IMR-90 (cell line): ENCODE measurements at regions of chr4 and their contacts with region 1.

Region 1: DNA sequence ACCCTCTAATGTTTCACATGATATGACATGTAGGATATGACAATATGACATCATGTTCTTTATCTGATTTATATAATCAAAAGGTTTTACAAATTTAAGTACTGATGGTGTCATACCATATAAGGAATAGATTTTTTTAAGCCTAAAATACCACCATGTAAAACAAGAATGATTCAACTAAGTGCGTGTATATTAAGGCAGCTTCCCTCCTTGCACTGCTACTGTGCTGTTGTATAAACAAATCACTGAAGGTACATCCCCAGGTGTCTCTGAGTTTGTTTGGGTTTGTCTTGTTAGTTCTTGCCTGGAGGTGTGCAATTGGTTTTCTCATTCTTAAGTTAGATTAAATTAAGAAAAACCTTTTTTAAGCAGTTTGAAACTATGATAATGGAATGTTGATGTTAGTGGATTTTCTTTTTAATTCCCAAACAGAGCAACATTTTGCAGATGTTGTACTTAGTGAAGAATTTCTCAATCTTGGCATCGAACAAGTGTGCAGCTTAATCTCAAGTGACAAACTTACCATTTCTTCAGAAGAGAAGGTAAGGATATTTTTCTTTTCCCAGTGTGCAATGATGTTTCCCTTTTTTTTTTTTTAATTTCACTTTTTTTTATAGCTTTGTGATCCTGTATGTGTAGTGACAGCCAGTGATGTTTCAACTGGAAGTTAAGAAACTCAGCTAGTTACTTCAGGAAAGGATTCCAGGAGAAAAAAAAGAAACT is 33.4 kb upstream of the MSMO1 start:
- DNase-seq: no peak
- ATAC-seq: peak; percentile 54
- H3K4me3 ChIP-seq: no peak overlapping the region
- H3K27ac ChIP-seq: no peak overlapping the region
- H3K4me1 ChIP-seq: peaks cover 2% of the 10 kb centered on the region; the same call in 1 of the 2 replicates
- H3K27me3 ChIP-seq: no peaks in the 10 kb centered on the region
- CTCF ChIP-seq: no peak
- POLR2A ChIP-seq: no peak
- RAD21 ChIP-seq: no peak

Region 2: GRCh38 chr4:165312506-165312905 is 18.4 kb after region 1 on chr4:
- CTCF ChIA-PET with region 1: no interaction called
- POLR2A ChIA-PET with region 1: interaction called, 10 read pairs
- dilution Hi-C with region 1: no loop called
- in situ Hi-C with region 1: no loop called
- intact Hi-C with region 1: no loop called
- DNase-seq: peak; percentile 81
- ATAC-seq: peak; percentile 81
- H3K4me3 ChIP-seq: no peak overlapping the region
- H3K27ac ChIP-seq: no peak overlapping the region
- H3K4me1 ChIP-seq: no peaks in the 10 kb centered on the region
- H3K27me3 ChIP-seq: no peaks in the 10 kb centered on the region
- CTCF ChIP-seq: no peak
- POLR2A ChIP-seq: no peak
- RAD21 ChIP-seq: no peak